ENCODE measurements at regions of chr1 and their contacts with region 1.

Region 1: GRCh38 chr1:174968750-174969244 is 30.9 kb upstream of the CACYBP start:
- DNase-seq: peak in 3 of 5 donors; percentile 56 to 89 (median 79)
- H3K4me3 ChIP-seq: peak overlapping the region; percentile 29
- H3K4me3 Mint-ChIP-seq: peak overlapping the region; percentile 67 to 90 (median 82)
- H3K27ac ChIP-seq: peak overlapping the region; percentile 55
- H3K27ac Mint-ChIP-seq: peak overlapping the region; percentile 82 to 99 (median 92)
- H3K4me1 ChIP-seq: peaks cover 80% of the 10 kb centered on the region
- H3K4me1 Mint-ChIP-seq: peaks cover 77 to 85% (median 84%) of the 10 kb centered on the region in 3 donors
- H3K27me3 ChIP-seq: no peaks in the 10 kb centered on the region
- H3K27me3 Mint-ChIP-seq: no peaks in the 10 kb centered on the region

Region 2: GRCh38 chr1:174800216-174800851 is 168.5 kb before region 1 on chr1:
- CTCF ChIA-PET with region 1: interaction called, 5 read pairs
- POLR2A ChIA-PET with region 1: interaction called, 17 read pairs
- DNase-seq: peak in 1 of 5 donors; percentile 46
- H3K4me3 ChIP-seq: peak overlapping the region; percentile 89
- H3K4me3 Mint-ChIP-seq: no peak overlapping the region
- H3K27ac ChIP-seq: peak overlapping the region; percentile 82
- H3K27ac Mint-ChIP-seq: no peak overlapping the region
- H3K4me1 ChIP-seq: peaks cover 17% of the 10 kb centered on the region
- H3K4me1 Mint-ChIP-seq: peaks cover 16 to 24% (median 22%) of the 10 kb centered on the region in 3 donors
- H3K27me3 ChIP-seq: no peaks in the 10 kb centered on the region
- H3K27me3 Mint-ChIP-seq: no peaks in the 10 kb centered on the region

Region 3: GRCh38 chr1:174982971-174983689 is 14.3 kb after region 1 on chr1:
- CTCF ChIA-PET with region 1: interaction called, 11 read pairs
- POLR2A ChIA-PET with region 1: interaction called, 5 read pairs
- DNase-seq: peak in 4 of 5 donors; percentile 29 to 62 (median 50)
- H3K4me3 ChIP-seq: no peak overlapping the region
- H3K4me3 Mint-ChIP-seq: no peak overlapping the region
- H3K27ac ChIP-seq: no peak overlapping the region
- H3K27ac Mint-ChIP-seq: peak overlapping the region in 4 of 8 donors; percentile 38 to 76 (median 71)
- H3K4me1 ChIP-seq: peaks cover 6% of the 10 kb centered on the region
- H3K4me1 Mint-ChIP-seq: peaks cover 13 to 54% (median 45%) of the 10 kb centered on the region in 3 donors
- H3K27me3 ChIP-seq: no peaks in the 10 kb centered on the region
- H3K27me3 Mint-ChIP-seq: peaks cover 0 to 1% of the 10 kb centered on the region in 2 donors